ENCODE measurements at regions of chr7 and their contacts with region 1.

Region 1: DNA sequence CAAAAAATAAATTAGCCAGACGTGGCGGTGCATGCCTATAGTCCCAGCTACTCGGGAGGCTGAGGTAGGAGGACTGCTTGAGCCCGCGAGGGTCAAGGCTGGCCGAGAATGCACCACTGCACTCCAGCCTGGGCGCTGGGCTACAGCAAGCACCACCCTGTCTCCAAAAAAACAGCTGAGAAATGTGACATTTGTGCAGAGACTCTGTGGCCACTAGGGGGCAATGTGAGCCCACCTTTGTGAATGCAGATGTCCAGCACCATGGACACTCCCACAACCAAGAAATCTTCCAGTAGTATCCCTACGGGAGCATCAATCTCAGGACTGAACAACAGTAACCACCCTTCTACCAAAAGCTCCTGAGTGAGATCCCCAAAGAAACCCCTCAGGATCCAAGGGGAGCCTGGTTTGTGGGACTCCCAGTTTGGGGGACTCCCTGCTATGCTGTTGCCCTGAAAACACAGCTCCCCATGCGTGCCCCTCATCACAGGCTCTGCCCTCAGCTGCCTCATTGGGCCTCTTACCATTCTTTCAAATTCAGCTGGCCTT is 6.2 kb upstream of the AHCYL2 start:
- DNase-seq: peak; percentile 85 to 93 (median 88)
- ATAC-seq: peak; percentile 96
- H3K4me3 ChIP-seq: no peak overlapping the region
- H3K27ac ChIP-seq: no peak overlapping the region
- H3K4me1 ChIP-seq: peaks cover 0 to 3% of the 10 kb centered on the region in 2 experiments; a peak in 1 of 5 replicates
- H3K27me3 ChIP-seq: peaks cover 8 to 27% of the 10 kb centered on the region in 2 experiments; a peak in 2 of 5 replicates
- CTCF ChIP-seq: peak; percentile 96 to 99 (median 98)
- EP300 ChIP-seq: peak; percentile 28; the same call in 1 of the 2 replicates
- POLR2A ChIP-seq: no peak
- RAD21 ChIP-seq: peak; percentile 97 to 99

Region 2: GRCh38 chr7:129271500-129272355 is 53.1 kb after region 1 on chr7:
- CTCF ChIA-PET with region 1: interaction called, 17 read pairs
- POLR2A ChIA-PET with region 1: no interaction called
- in situ Hi-C with region 1: no loop called
- intact Hi-C with region 1: loop called (anchors 1 kb)
- DNase-seq: peak; percentile 73 to 83 (median 76)
- ATAC-seq: peak; percentile 99
- H3K4me3 ChIP-seq: no peak overlapping the region
- H3K27ac ChIP-seq: no peak overlapping the region
- H3K4me1 ChIP-seq: no peaks in the 10 kb centered on the region
- H3K27me3 ChIP-seq: no peaks in the 10 kb centered on the region
- CTCF ChIP-seq: peak; percentile 85 to 96 (median 85)
- EP300 ChIP-seq: no peak
- POLR2A ChIP-seq: no peak
- RAD21 ChIP-seq: peak; percentile 61 to 93

Region 3: DNA sequence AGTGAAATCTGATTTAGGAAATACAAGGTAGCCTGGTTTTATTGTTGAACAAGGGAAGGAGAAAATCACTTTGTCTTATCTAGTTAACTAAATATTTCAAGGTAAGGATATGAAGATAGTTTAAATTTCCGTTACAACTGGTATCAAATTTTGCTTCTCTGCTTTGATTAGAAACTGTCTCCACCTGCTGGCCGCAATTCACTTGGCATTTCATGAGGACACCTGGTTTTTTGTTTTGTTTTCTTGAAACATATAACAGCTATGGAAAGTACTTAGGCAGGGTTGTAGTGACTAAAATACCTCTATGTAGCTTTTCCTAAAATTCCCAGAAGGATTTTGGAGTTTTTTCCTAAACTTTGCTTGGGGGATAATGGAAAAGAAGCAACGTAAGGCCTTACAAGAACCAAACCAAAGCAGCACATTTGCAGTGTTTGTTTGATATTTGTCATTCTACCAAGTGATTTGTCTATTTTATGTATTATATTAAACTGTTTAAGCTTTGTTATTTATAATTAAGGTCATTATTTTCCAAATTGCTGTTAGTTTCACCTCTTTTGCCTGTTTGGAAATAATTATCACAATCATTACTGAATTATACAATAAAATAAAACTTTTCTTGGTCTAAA is 79.8 kb after region 1 on chr7:
- CTCF ChIA-PET with region 1: interaction called, 57 read pairs
- POLR2A ChIA-PET with region 1: no interaction called
- in situ Hi-C with region 1: loop called (anchors 5 kb)
- intact Hi-C with region 1: loop called (anchors 1 kb)
- DNase-seq: peak; percentile 29 to 70 (median 50)
- ATAC-seq: peak; percentile 76; the same call in 2 of the 3 replicates
- H3K4me3 ChIP-seq: no peak overlapping the region
- H3K27ac ChIP-seq: no peak overlapping the region
- H3K4me1 ChIP-seq: no peaks in the 10 kb centered on the region
- H3K27me3 ChIP-seq: no peaks in the 10 kb centered on the region; a peak in 1 of 5 replicates
- CTCF ChIP-seq: peak; percentile 68 to 97 (median 88)
- EP300 ChIP-seq: no peak
- POLR2A ChIP-seq: no peak
- RAD21 ChIP-seq: peak; percentile 85 to 89

Region 4: DNA sequence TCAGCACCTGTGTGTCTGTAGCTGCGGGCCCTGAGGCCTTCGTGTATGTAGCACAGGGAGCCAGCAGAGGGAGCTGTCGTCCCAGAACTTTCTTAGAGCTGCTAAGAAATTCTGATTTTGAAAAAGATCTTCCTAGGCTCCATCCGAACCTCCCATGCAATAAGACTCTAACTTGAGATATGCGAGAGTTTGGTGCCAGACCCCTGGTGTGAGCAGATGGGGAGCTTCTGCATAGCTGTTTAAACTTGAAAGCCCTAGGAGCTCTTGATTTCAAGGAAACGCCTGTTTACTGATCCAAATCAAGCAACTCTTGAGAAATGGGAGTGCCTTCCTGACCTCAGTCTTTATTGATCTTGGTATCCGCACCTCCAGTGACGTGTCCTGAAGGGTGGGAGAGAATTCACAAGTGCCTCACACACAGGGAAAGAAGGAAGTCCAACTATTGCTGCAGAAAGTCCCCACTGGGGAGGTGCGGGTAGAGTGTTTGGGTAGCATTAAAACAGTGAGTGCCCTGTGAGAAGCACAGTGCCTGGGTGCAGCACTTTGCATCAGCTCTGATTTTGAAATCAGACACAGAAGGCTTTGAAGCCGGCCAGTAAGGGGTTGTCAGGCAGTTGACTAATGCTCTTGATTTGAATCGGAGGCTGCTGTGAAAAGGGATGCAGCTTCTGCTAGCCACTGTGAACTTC is 149.3 kb after region 1 on chr7:
- CTCF ChIA-PET with region 1: interaction called, 3 read pairs
- POLR2A ChIA-PET with region 1: no interaction called
- in situ Hi-C with region 1: no loop called
- intact Hi-C with region 1: loop called (anchors 1 kb)
- DNase-seq: peak; percentile 79 to 91 (median 83)
- ATAC-seq: peak; percentile 96
- H3K4me3 ChIP-seq: 0 out of 2 replicates have a peak overlapping the region, but pooled peaks have one; percentile 0
- H3K27ac ChIP-seq: no peak overlapping the region
- H3K4me1 ChIP-seq: peaks cover 6 to 15% of the 10 kb centered on the region in 2 experiments; a peak in 4 of 5 replicates
- H3K27me3 ChIP-seq: no peaks in the 10 kb centered on the region
- CTCF ChIP-seq: peak; percentile 91 to 99 (median 98)
- EP300 ChIP-seq: no peak
- POLR2A ChIP-seq: no peak
- RAD21 ChIP-seq: peak; percentile 90 to 94

Region 5: GRCh38 chr7:129468087-129468486 is 249.5 kb after region 1 on chr7:
- CTCF ChIA-PET with region 1: interaction called, 44 read pairs
- POLR2A ChIA-PET with region 1: interaction called, 3 read pairs
- in situ Hi-C with region 1: loop called (anchors 5 kb)
- intact Hi-C with region 1: loop called (anchors 1 kb)
- DNase-seq: no peak
- ATAC-seq: no peak
- H3K4me3 ChIP-seq: no peak overlapping the region
- H3K27ac ChIP-seq: no peak overlapping the region
- H3K4me1 ChIP-seq: no peaks in the 10 kb centered on the region
- H3K27me3 ChIP-seq: no peaks in the 10 kb centered on the region
- CTCF ChIP-seq: no peak
- EP300 ChIP-seq: no peak
- POLR2A ChIP-seq: no peak
- RAD21 ChIP-seq: no peak

Region 6: GRCh38 chr7:129644634-129645230 is 426.1 kb after region 1 on chr7:
- CTCF ChIA-PET with region 1: interaction called, 14 read pairs
- POLR2A ChIA-PET with region 1: interaction called, 3 read pairs
- in situ Hi-C with region 1: loop called (anchors 5 kb)
- intact Hi-C with region 1: loop called (anchors 1 kb)
- DNase-seq: peak in 3 of 4 experiments; percentile 31 to 71 (median 35)
- ATAC-seq: peak; percentile 81
- H3K4me3 ChIP-seq: no peak overlapping the region
- H3K27ac ChIP-seq: no peak overlapping the region
- H3K4me1 ChIP-seq: no peaks in the 10 kb centered on the region
- H3K27me3 ChIP-seq: no peaks in the 10 kb centered on the region
- CTCF ChIP-seq: peak; percentile 61 to 86 (median 66); a peak in 5 of 6 replicates
- EP300 ChIP-seq: no peak
- POLR2A ChIP-seq: no peak
- RAD21 ChIP-seq: peak; percentile 86 to 91

Region 7: GRCh38 chr7:130010689-130011412 is 792.3 kb after region 1 on chr7:
- CTCF ChIA-PET with region 1: interaction called, 3 read pairs
- POLR2A ChIA-PET with region 1: no interaction called
- in situ Hi-C with region 1: no loop called
- intact Hi-C with region 1: loop called (anchors 5 kb)
- DNase-seq: peak; percentile 84 to 93 (median 87)
- ATAC-seq: peak; percentile 72
- H3K4me3 ChIP-seq: no peak overlapping the region
- H3K27ac ChIP-seq: peak overlapping the region; percentile 73; the same call in 2 of the 3 replicates
- H3K4me1 ChIP-seq: peaks cover 15 to 19% of the 10 kb centered on the region in 2 experiments
- H3K27me3 ChIP-seq: no peaks in the 10 kb centered on the region
- CTCF ChIP-seq: peak; percentile 95 to 98 (median 97)
- EP300 ChIP-seq: no peak
- POLR2A ChIP-seq: no peak
- RAD21 ChIP-seq: peak; percentile 97 to 98

Measured in K562 (cell line).